ENCODE measurements at regions of chr12 and their contacts with region 1.

Region 1: GRCh38 chr12:111396726-111397445 is 8.8 kb upstream of the SH2B3 start:
- DNase-seq: peak; percentile 88
- ATAC-seq: peak; percentile 91
- H3K4me3 Mint-ChIP-seq: peak overlapping the region; percentile 57
- H3K27ac Mint-ChIP-seq: peak overlapping the region; percentile 72
- H3K4me1 Mint-ChIP-seq: peaks cover 28% of the 10 kb centered on the region
- H3K27me3 Mint-ChIP-seq: peaks cover 30% of the 10 kb centered on the region

Region 2: GRCh38 chr12:111368788-111369495 is 27.9 kb before region 1 on chr12 and contains the start of gene PHETA1:
- CTCF ChIA-PET with region 1: interaction called, 24 read pairs
- DNase-seq: peak; percentile 85
- ATAC-seq: peak; percentile 97
- H3K4me3 Mint-ChIP-seq: peak within 1 kb of the TSS; percentile 71
- H3K27ac Mint-ChIP-seq: no peak within 1 kb of the TSS
- H3K4me1 Mint-ChIP-seq: peaks cover 15% of the 10 kb centered on the region
- H3K27me3 Mint-ChIP-seq: peaks cover 9% of the 10 kb centered on the region
- total RNA-seq, gene PHETA1: 2.8 to 3.4 TPM

Region 3: GRCh38 chr12:111424793-111425251 is 27.9 kb after region 1 on chr12:
- CTCF ChIA-PET with region 1: interaction called, 10 read pairs
- DNase-seq: no peak
- ATAC-seq: no peak
- H3K4me3 Mint-ChIP-seq: no peak overlapping the region
- H3K27ac Mint-ChIP-seq: peak overlapping the region; percentile 65
- H3K4me1 Mint-ChIP-seq: peaks cover 61% of the 10 kb centered on the region
- H3K27me3 Mint-ChIP-seq: no peaks in the 10 kb centered on the region

Region 4: GRCh38 chr12:111469401-111469800 is 72.5 kb after region 1 on chr12:
- CTCF ChIA-PET with region 1: interaction called, 950 read pairs
- DNase-seq: no peak
- ATAC-seq: no peak
- H3K4me3 Mint-ChIP-seq: no peak overlapping the region
- H3K27ac Mint-ChIP-seq: no peak overlapping the region
- H3K4me1 Mint-ChIP-seq: peaks cover 1% of the 10 kb centered on the region
- H3K27me3 Mint-ChIP-seq: no peaks in the 10 kb centered on the region

Region 5: GRCh38 chr12:111488271-111488670 is 91.4 kb after region 1 on chr12:
- CTCF ChIA-PET with region 1: interaction called, 28 read pairs
- DNase-seq: no peak
- ATAC-seq: no peak
- H3K4me3 Mint-ChIP-seq: no peak overlapping the region
- H3K27ac Mint-ChIP-seq: no peak overlapping the region
- H3K4me1 Mint-ChIP-seq: no peaks in the 10 kb centered on the region
- H3K27me3 Mint-ChIP-seq: no peaks in the 10 kb centered on the region

Region 6: GRCh38 chr12:111529424-111530368 is 132.8 kb after region 1 on chr12:
- CTCF ChIA-PET with region 1: interaction called, 80 read pairs
- DNase-seq: peak; percentile 76
- ATAC-seq: peak; percentile 76
- H3K4me3 Mint-ChIP-seq: no peak overlapping the region
- H3K27ac Mint-ChIP-seq: no peak overlapping the region
- H3K4me1 Mint-ChIP-seq: peaks cover 11% of the 10 kb centered on the region
- H3K27me3 Mint-ChIP-seq: no peaks in the 10 kb centered on the region

Measured in activated CD8-positive, alpha-beta memory T cell treated with anti-CD3 and anti-CD28 coated beads, Interleukin-2, amount 10 ng/mL, durations not matched to agents 7 days and 5 days (primary cell).